ENCODE measurements at regions of chrX and their contacts with region 1.

Region 1: DNA sequence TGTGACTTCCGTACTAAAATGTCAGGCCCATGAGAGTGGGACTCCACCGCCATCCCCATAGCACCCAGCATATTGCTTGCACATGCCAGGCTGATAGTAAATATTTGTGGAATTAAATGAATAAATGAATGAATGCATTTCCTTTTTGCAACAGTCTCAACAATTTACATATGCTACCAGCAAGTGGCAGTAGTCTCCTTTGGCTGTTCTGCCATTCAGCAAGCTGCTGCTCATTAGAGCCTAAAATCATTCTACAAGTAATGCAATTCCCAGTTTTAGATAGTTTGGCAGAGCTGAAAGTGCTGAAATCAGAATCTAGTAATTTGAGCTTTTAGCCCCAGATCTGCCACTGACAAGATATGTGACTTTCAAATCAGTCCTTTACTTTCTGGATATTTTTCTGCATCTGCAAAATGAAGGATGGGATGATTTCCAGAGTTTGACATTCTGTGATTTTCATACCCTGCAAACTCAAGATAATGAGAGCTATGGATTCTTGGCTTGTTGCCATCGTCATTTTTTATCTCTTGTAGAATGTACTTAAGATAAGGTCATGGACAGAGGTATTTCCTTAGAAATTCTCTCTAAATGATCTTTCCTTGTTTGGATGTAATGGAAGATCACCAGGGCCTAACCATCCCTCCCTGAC is 35.7 kb upstream of the INTS6L start:
- DNase-seq: peak; percentile 13 to 56 (median 20)
- ATAC-seq: peak; percentile 75
- H3K4me3 ChIP-seq: no peak overlapping the region
- H3K27ac ChIP-seq: no peak overlapping the region
- H3K4me1 ChIP-seq: no peaks in the 10 kb centered on the region
- H3K27me3 ChIP-seq: no peaks in the 10 kb centered on the region
- CTCF ChIP-seq: peak; percentile 69 to 86 (median 70)
- EP300 ChIP-seq: no peak
- POLR2A ChIP-seq: no peak
- RAD21 ChIP-seq: peak; percentile 91 to 95

Region 2: DNA sequence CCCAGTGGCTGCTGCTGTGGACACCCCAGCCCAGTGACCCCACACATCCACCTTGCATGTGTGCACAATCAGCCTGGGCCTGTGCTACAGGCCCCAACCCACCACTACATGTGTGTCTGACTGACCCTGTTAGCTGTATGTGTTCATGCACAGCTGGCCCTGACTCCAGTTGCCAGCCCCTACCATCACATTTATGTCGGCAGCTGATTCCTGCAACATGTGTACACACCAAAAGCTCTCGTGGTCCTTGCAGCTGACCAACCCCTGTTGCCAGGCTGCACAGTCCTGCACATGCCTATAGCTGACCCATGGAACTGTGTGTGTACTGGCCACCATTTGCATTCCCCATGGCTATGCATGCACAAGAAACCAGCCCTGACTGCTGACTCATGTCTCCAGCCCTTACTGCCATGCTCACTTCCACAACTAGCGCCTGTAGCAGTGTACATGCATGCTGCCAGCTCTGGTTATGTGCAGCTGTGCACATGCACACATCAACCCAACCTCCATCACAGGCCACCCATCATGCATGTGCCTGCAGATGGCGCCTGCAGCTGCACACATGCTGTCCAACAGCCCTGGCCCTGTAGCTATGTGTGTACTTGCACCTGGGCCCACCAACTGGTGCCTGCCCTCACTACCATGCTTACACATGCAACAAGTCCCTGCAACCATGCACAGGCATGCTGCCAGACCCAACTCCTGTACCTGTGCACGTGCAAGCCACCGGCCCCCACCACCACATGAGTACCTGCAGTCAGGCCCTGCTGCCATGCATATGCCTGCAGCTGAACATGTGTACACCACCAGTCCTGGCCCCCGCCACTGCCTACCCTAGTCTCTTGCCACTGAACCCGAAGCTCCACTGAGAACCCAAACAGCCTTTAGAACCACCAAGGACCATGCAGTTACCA is 34.9 kb before region 1 on chrX:
- CTCF ChIA-PET with region 1: no interaction called
- POLR2A ChIA-PET with region 1: no interaction called
- in situ Hi-C with region 1: no loop called
- intact Hi-C with region 1: no loop called
- DNase-seq: no peak
- ATAC-seq: no peak
- H3K4me3 ChIP-seq: no peak overlapping the region
- H3K27ac ChIP-seq: no peak overlapping the region
- H3K4me1 ChIP-seq: no peaks in the 10 kb centered on the region
- H3K27me3 ChIP-seq: peaks cover 0 to 17% of the 10 kb centered on the region in 2 experiments; a peak in 3 of 5 replicates
- CTCF ChIP-seq: no peak
- EP300 ChIP-seq: no peak
- POLR2A ChIP-seq: no peak
- RAD21 ChIP-seq: no peak

Region 3: GRCh38 chrX:135543924-135544323 is 59.2 kb after region 1 on chrX:
- CTCF ChIA-PET with region 1: no interaction called
- POLR2A ChIA-PET with region 1: no interaction called
- in situ Hi-C with region 1: no loop called
- intact Hi-C with region 1: loop called (anchors 10 kb)
- DNase-seq: peak in 3 of 4 experiments; percentile 30 to 56 (median 40)
- ATAC-seq: peak; percentile 88
- H3K4me3 ChIP-seq: no peak overlapping the region
- H3K27ac ChIP-seq: no peak overlapping the region
- H3K4me1 ChIP-seq: peaks cover 3 to 9% of the 10 kb centered on the region in 2 experiments; a peak in 3 of 5 replicates
- H3K27me3 ChIP-seq: no peaks in the 10 kb centered on the region
- CTCF ChIP-seq: peak; percentile 36 to 54 (median 52); a peak in 4 of 6 replicates
- EP300 ChIP-seq: no peak
- POLR2A ChIP-seq: no peak
- RAD21 ChIP-seq: peak in 1 of 2 experiments; percentile 44; a peak in 2 of 4 replicates

Region 4: GRCh38 chrX:135572436-135572835 is 87.7 kb after region 1 on chrX:
- CTCF ChIA-PET with region 1: interaction called, 36 read pairs
- POLR2A ChIA-PET with region 1: no interaction called
- in situ Hi-C with region 1: no loop called
- intact Hi-C with region 1: loop called (anchors 1 kb)
- DNase-seq: no peak
- ATAC-seq: no peak
- H3K4me3 ChIP-seq: no peak overlapping the region
- H3K27ac ChIP-seq: no peak overlapping the region
- H3K4me1 ChIP-seq: no peaks in the 10 kb centered on the region
- H3K27me3 ChIP-seq: no peaks in the 10 kb centered on the region
- CTCF ChIP-seq: peak in 2 of 3 experiments; percentile 37 to 60; a peak in 3 of 6 replicates
- EP300 ChIP-seq: no peak
- POLR2A ChIP-seq: no peak
- RAD21 ChIP-seq: peak; percentile 33 to 55

Region 5: GRCh38 chrX:135585153-135585552 is 100.4 kb after region 1 on chrX:
- CTCF ChIA-PET with region 1: no interaction called
- POLR2A ChIA-PET with region 1: no interaction called
- in situ Hi-C with region 1: loop called (anchors 5 kb)
- intact Hi-C with region 1: no loop called
- DNase-seq: peak in 1 of 4 experiments; percentile 4
- ATAC-seq: peak; percentile 62
- H3K4me3 ChIP-seq: no peak overlapping the region
- H3K27ac ChIP-seq: no peak overlapping the region
- H3K4me1 ChIP-seq: no peaks in the 10 kb centered on the region
- H3K27me3 ChIP-seq: no peaks in the 10 kb centered on the region; a peak in 1 of 5 replicates
- CTCF ChIP-seq: no peak
- EP300 ChIP-seq: no peak
- POLR2A ChIP-seq: no peak
- RAD21 ChIP-seq: no peak

Region 6: GRCh38 chrX:135596495-135596894 is 111.7 kb after region 1 on chrX:
- CTCF ChIA-PET with region 1: interaction called, 11 read pairs
- POLR2A ChIA-PET with region 1: no interaction called
- in situ Hi-C with region 1: no loop called
- intact Hi-C with region 1: loop called (anchors 1 kb)
- DNase-seq: peak; percentile 52 to 77 (median 56)
- ATAC-seq: peak; percentile 98
- H3K4me3 ChIP-seq: no peak overlapping the region
- H3K27ac ChIP-seq: no peak overlapping the region
- H3K4me1 ChIP-seq: 0 out of 5 replicates have a peak, but pooled peaks cover 0 to 4% of the 10 kb centered on the region in 2 experiments
- H3K27me3 ChIP-seq: no peaks in the 10 kb centered on the region
- CTCF ChIP-seq: peak; percentile 79 to 86 (median 85)
- EP300 ChIP-seq: no peak
- POLR2A ChIP-seq: no peak
- RAD21 ChIP-seq: peak; percentile 83 to 88

Region 7: GRCh38 chrX:135707880-135708279 is 223.1 kb after region 1 on chrX:
- CTCF ChIA-PET with region 1: no interaction called
- POLR2A ChIA-PET with region 1: no interaction called
- in situ Hi-C with region 1: no loop called
- intact Hi-C with region 1: loop called (anchors 5 kb)
- DNase-seq: peak; percentile 76 to 82 (median 80)
- ATAC-seq: peak; percentile 100
- H3K4me3 ChIP-seq: no peak overlapping the region
- H3K27ac ChIP-seq: no peak overlapping the region
- H3K4me1 ChIP-seq: no peaks in the 10 kb centered on the region; a peak in 1 of 5 replicates
- H3K27me3 ChIP-seq: no peaks in the 10 kb centered on the region
- CTCF ChIP-seq: peak; percentile 88 to 99 (median 90)
- EP300 ChIP-seq: no peak
- POLR2A ChIP-seq: no peak
- RAD21 ChIP-seq: peak; percentile 59 to 78